ENCODE measurements at regions of chr11 and their contacts with region 1.

Region 1: GRCh38 chr11:47583844-47584243 is 2.6 kb upstream of the FAM180B start:
- DNase-seq: no peak
- ATAC-seq: no peak
- H3K4me3 Mint-ChIP-seq: no peak overlapping the region
- H3K27ac Mint-ChIP-seq: no peak overlapping the region
- H3K4me1 Mint-ChIP-seq: peaks cover 17% of the 10 kb centered on the region
- H3K27me3 Mint-ChIP-seq: no peaks in the 10 kb centered on the region
- CTCF ChIP-seq: no peak

Region 2: DNA sequence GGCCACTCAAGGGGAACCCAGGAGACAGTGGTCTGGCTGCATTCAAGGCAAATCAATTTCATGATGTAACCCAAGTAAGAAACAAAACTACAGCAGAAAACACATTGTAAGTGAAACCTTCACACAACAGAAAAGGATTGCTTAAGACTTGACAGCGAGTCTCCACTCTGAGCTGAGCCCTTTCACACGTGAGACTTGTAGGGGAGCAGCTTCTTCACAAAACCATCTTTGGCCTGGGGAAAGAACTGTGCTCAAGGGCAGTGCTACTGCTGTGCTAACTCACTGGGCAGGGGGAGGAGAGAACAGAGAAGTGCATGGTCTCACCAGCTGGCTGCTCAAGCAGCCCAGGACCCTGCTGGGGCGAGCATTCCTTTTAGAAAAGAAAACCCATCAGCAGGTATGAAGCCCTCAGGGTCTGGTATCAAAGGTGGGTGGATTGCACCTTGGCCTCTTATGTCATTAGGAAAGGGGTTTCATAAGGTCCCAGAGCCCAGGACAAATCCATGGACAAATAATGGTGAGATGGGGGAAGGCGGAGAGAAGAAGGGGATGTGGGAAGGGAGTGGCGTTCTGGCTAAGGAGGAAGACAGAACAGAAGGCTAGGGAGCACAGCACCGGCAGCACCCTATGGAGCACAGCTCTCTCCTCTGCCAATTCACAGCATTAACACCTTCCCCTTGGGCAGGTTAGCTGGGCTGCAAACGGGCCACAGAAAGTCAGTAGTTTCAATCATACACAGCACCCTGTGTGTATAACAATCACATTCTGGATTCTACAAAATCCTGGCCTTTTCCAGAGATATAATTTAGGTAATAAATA is 114.3 kb before region 1 on chr11:
- CTCF ChIA-PET with region 1: no interaction called
- POLR2A ChIA-PET with region 1: interaction called, 10 read pairs
- intact Hi-C with region 1: no loop called
- DNase-seq: no peak
- ATAC-seq: no peak
- H3K4me3 Mint-ChIP-seq: no peak overlapping the region
- H3K27ac Mint-ChIP-seq: no peak overlapping the region
- H3K4me1 Mint-ChIP-seq: no peaks in the 10 kb centered on the region
- H3K27me3 Mint-ChIP-seq: no peaks in the 10 kb centered on the region
- CTCF ChIP-seq: no peak

Measured in activated B cell treated with CpG ODN at 0.5 μM for 24 hours (primary cell).